PC-9 (cell line): ENCODE measurements at regions of chr11 and their contacts with region 1.

Region 1: GRCh38 chr11:33373636-33374035 is 116.5 kb downstream of the HIPK3 start:
- DNase-seq: no peak
- H3K4me3 ChIP-seq: no peak overlapping the region
- H3K27ac ChIP-seq: 0 out of 2 replicates have a peak overlapping the region, but pooled peaks have one; percentile 81
- H3K4me1 ChIP-seq: peaks cover 54% of the 10 kb centered on the region
- H3K27me3 ChIP-seq: no peaks in the 10 kb centered on the region
- CTCF ChIP-seq: no peak

Region 2: GRCh38 chr11:32529994-32530588 is 843.5 kb before region 1 on chr11:
- CTCF ChIA-PET with region 1: no interaction called
- POLR2A ChIA-PET with region 1: no interaction called
- intact Hi-C with region 1: no loop called
- DNase-seq: no peak
- H3K4me3 ChIP-seq: no peak overlapping the region
- H3K27ac ChIP-seq: no peak overlapping the region
- H3K4me1 ChIP-seq: peaks cover 7% of the 10 kb centered on the region; the same call in 1 of the 2 replicates
- H3K27me3 ChIP-seq: no peaks in the 10 kb centered on the region
- CTCF ChIP-seq: no peak

Region 3: GRCh38 chr11:33347490-33348125 is 26.0 kb before region 1 on chr11:
- CTCF ChIA-PET with region 1: no interaction called
- POLR2A ChIA-PET with region 1: no interaction called
- intact Hi-C with region 1: no loop called
- DNase-seq: no peak
- H3K4me3 ChIP-seq: no peak overlapping the region
- H3K27ac ChIP-seq: no peak overlapping the region
- H3K4me1 ChIP-seq: no peaks in the 10 kb centered on the region
- H3K27me3 ChIP-seq: no peaks in the 10 kb centered on the region
- CTCF ChIP-seq: no peak

Region 4: DNA sequence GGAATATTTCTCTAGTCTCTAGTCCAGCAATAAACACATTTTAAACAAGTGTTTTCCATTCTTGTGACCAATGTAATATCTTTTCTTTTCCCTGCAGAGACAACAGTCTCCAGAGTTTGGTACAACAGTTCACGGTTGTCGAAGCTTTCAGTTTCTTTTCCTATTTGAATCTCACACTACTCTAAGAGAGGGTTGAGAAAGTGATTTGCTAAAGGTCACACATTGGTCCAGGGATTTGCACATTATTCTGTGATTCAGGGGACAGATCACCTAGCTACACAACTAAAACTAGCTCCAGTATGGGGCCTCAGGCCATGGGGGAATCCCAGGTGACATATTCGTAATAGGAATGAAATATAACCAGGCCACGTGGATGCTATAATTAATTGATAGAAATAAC is 16.0 kb after region 1 on chr11:
- CTCF ChIA-PET with region 1: no interaction called
- POLR2A ChIA-PET with region 1: no interaction called
- intact Hi-C with region 1: no loop called
- DNase-seq: no peak
- H3K4me3 ChIP-seq: no peak overlapping the region
- H3K27ac ChIP-seq: no peak overlapping the region
- H3K4me1 ChIP-seq: no peaks in the 10 kb centered on the region
- H3K27me3 ChIP-seq: no peaks in the 10 kb centered on the region
- CTCF ChIP-seq: no peak

Region 5: DNA sequence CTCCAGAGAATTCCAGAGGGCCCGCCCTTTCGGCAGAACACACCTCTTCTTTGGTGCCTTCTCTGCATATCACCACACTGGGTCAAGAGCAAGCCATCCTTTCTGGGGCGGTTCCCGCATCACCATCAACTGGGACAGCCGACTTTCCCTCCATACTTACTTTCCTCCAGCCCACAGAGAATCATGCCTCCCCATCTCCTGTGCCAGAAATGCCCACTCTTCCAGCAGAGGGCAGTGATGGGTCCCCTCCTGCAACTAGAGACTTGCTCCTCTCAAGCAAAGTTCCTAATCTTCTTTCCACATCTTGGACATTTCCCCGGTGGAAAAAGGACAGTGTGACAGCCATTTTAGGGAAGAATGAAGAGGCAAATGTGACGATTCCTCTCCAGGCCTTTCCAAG is 169.3 kb after region 1 on chr11:
- CTCF ChIA-PET with region 1: no interaction called
- POLR2A ChIA-PET with region 1: no interaction called
- intact Hi-C with region 1: loop called (anchors 5 kb)
- DNase-seq: peak in 1 of 2 experiments; percentile 58
- H3K4me3 ChIP-seq: no peak overlapping the region
- H3K27ac ChIP-seq: no peak overlapping the region
- H3K4me1 ChIP-seq: no peaks in the 10 kb centered on the region
- H3K27me3 ChIP-seq: no peaks in the 10 kb centered on the region
- CTCF ChIP-seq: peak; percentile 84

Region 6: GRCh38 chr11:33588084-33588483 is 214.4 kb after region 1 on chr11:
- CTCF ChIA-PET with region 1: no interaction called
- POLR2A ChIA-PET with region 1: no interaction called
- intact Hi-C with region 1: no loop called
- DNase-seq: no peak
- H3K4me3 ChIP-seq: no peak overlapping the region
- H3K27ac ChIP-seq: no peak overlapping the region
- H3K4me1 ChIP-seq: no peaks in the 10 kb centered on the region
- H3K27me3 ChIP-seq: no peaks in the 10 kb centered on the region
- CTCF ChIP-seq: no peak